ENCODE measurements at regions of chr13 and their contacts with region 1.

Region 1: DNA sequence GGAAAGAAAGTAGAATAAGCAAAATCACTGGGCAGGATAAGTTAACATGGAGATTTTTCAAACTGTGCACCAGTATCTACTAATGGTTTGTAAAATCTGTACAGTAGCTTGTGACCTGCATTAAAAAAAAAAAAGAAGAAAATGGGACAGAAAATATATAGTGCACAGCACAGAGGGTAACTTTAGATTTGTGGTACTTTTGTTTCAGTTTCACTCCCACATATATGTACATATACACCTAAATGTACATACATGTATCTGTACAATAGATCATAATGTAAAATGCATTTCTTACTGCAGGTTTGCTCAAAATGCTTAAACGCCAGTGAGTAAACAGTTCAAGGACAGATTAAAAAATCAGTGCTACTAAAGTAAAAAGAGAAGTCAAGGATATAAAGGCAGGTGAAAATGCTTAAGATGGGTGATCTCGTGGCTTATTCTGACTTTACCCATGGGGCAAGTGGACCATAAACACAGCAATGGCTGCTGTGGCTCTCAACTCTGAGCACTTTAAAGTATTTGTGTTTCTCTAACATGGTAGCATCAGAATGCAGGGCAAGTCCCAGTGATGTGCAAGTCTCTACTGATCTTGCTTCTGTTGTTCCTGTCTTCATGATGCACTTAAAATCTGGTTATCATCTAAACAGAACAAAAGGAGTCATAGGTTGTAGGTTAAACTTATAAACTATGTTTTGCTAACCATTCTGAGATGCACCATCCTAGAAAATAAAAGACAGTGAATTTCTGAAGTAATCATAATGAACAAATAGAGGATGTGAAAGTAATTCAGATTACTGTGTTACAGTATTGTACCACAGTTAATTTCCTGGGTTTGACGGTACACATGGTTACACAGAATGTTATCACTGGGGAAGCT is 112.3 kb downstream of the MIPEP start:
- DNase-seq: peak; percentile 56
- ATAC-seq: peak; percentile 96
- H3K4me3 ChIP-seq: no peak overlapping the region
- H3K27ac ChIP-seq: peak overlapping the region; percentile 94
- H3K4me1 ChIP-seq: peaks cover 40% of the 10 kb centered on the region
- H3K27me3 ChIP-seq: no peaks in the 10 kb centered on the region
- CTCF ChIP-seq: no peak
- EP300 ChIP-seq: peak; percentile 84 to 91
- POLR2A ChIP-seq: no peak
- RAD21 ChIP-seq: no peak

Region 2: DNA sequence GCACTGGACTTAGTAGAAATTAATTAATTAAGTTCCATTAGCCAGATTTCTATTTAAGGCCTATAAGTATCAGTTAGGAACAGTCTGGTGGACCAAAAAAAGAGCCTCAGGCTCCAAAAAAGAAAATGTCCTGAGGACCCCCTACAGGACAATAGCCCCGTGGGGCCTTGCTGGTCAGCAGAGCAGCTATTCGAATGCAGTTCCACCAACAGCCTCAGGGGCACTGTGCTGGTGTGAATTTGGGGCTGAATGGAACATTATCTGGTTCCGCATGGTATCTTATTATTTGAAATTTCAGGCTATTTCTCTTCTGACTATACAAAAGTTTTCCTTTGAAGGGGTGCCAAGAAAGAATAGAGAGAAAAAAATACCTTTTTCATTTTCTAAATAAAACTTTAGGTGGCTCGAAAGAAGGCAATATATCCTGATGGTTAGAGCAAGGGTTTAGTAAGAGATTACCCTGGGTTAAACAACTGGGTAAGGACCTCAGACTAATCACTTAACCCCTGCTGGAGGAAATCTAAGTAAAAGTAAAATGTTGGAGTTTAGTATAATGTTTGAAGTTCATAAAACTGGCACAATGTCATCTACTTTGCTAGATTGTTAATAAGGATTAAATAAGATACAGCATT is 34.9 kb before region 1 on chr13:
- CTCF ChIA-PET with region 1: interaction called, 10 read pairs
- POLR2A ChIA-PET with region 1: no interaction called
- RAD21 ChIA-PET with region 1: no interaction called
- SMC1A ChIA-PET with region 1: interaction called, 4 read pairs
- in situ Hi-C with region 1: no loop called
- intact Hi-C with region 1: no loop called
- DNase-seq: no peak
- ATAC-seq: peak; percentile 78
- H3K4me3 ChIP-seq: no peak overlapping the region
- H3K27ac ChIP-seq: no peak overlapping the region
- H3K4me1 ChIP-seq: no peaks in the 10 kb centered on the region
- H3K27me3 ChIP-seq: no peaks in the 10 kb centered on the region
- CTCF ChIP-seq: peak; percentile 17 to 58 (median 57)
- EP300 ChIP-seq: no peak
- POLR2A ChIP-seq: no peak
- RAD21 ChIP-seq: no peak

Region 3: DNA sequence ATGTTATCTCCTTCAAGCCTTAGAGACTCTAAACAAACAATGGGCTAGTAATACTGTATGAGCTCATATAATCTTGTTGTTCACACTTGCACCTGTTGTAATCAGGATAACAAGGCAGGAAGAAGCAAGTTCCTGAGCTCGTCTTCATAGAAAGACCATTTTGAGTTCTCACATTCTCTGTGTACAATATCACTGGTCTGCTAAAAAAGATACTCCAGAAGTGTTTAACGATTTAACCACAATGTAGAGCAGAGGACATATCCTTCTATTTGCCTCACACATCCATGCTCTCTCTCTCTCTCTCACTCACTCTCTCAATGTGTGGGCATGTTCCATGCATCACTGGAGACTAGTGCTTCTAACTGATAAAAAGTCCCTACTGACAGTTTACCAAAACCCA is 10.7 kb before region 1 on chr13:
- CTCF ChIA-PET with region 1: interaction called, 3 read pairs
- POLR2A ChIA-PET with region 1: no interaction called
- RAD21 ChIA-PET with region 1: interaction called, 5 read pairs
- SMC1A ChIA-PET with region 1: interaction called, 10 read pairs
- in situ Hi-C with region 1: no loop called
- intact Hi-C with region 1: no loop called
- DNase-seq: no peak
- ATAC-seq: peak; percentile 67
- H3K4me3 ChIP-seq: no peak overlapping the region
- H3K27ac ChIP-seq: no peak overlapping the region; the same call in 1 of the 2 replicates
- H3K4me1 ChIP-seq: peaks cover 31% of the 10 kb centered on the region
- H3K27me3 ChIP-seq: no peaks in the 10 kb centered on the region
- CTCF ChIP-seq: no peak
- EP300 ChIP-seq: no peak; a peak in 1 of 4 replicates
- POLR2A ChIP-seq: no peak
- RAD21 ChIP-seq: 0 out of 2 replicates have a peak, but pooled peaks have one; percentile 1

Region 4: DNA sequence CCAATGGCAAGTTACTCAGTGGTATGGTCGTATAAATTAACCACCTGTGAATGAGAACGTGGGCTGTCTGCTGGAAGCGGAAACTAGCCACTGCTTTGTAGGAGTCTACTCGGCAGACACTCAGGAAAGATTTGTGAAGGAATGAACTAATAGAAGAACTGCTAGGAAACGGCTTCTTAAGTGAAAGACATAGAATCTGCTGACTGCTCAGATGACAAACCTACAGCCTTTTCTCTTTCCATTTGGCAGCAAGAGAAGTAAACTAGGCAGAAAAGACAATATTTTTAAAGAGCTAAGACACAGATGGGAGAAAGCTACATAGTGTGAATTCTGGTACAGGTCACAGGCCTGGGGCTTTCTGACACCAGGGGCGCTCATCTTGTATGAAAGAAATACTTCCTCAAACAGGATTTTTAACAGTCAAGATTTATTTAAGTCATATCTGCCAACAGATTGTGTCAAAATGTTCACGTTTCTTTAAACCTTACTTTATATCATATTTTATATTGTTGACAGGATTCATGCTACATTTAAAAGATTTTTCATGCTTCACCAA is 33.8 kb after region 1 on chr13:
- CTCF ChIA-PET with region 1: interaction called, 9 read pairs
- POLR2A ChIA-PET with region 1: interaction called, 3 read pairs
- RAD21 ChIA-PET with region 1: interaction called, 8 read pairs
- SMC1A ChIA-PET with region 1: interaction called, 11 read pairs
- in situ Hi-C with region 1: no loop called
- intact Hi-C with region 1: loop called (anchors 1 kb)
- DNase-seq: no peak
- ATAC-seq: peak; percentile 76
- H3K4me3 ChIP-seq: no peak overlapping the region
- H3K27ac ChIP-seq: peak overlapping the region; percentile 81
- H3K4me1 ChIP-seq: peaks cover 56% of the 10 kb centered on the region
- H3K27me3 ChIP-seq: no peaks in the 10 kb centered on the region
- CTCF ChIP-seq: peak; percentile 41 to 57 (median 51); a peak in 4 of 6 replicates
- EP300 ChIP-seq: 0 out of 4 replicates have a peak, but pooled peaks of 1 of the 2 experiments have one; percentile 35
- POLR2A ChIP-seq: no peak
- RAD21 ChIP-seq: peak; percentile 53